Activated CD8-positive, alpha-beta T cell treated with anti-CD3 and anti-CD28 coated beads for 36 hours (primary cell): ENCODE measurements at regions of chr22 and their contacts with region 1.

Region 1: DNA sequence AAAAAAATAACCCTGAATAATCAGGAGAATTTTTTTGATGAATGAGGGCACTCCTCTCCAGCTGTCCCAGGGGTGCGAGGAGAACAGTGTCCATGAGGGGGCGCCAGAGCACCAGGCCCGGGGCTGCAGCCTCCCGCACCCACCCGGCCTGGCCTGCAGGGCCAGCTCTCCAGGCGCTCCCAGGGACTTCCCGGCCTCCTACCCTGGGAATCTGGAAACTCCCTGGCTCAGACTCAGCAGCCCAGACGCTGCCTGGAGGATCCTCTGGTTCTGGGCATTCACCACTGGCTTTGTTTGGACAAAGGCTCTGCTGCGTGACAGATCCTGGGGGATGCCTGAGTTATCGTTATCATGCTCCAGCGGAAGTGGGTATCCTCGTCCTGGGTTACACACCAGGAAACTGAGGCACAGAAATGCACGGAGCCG is 31.0 kb downstream of the MCM5 start:
- DNase-seq: peak; percentile 71
- ATAC-seq: peak; percentile 73
- H3K4me3 Mint-ChIP-seq: no peak overlapping the region
- H3K27ac Mint-ChIP-seq: no peak overlapping the region
- H3K4me1 Mint-ChIP-seq: no peaks in the 10 kb centered on the region
- H3K27me3 Mint-ChIP-seq: no peaks in the 10 kb centered on the region
- CTCF ChIP-seq: peak; percentile 92

Region 2: GRCh38 chr22:35274154-35274871 is 156.6 kb before region 1 on chr22:
- CTCF ChIA-PET with region 1: no interaction called
- POLR2A ChIA-PET with region 1: no interaction called
- intact Hi-C with region 1: no loop called
- DNase-seq: no peak
- ATAC-seq: no peak
- H3K4me3 Mint-ChIP-seq: no peak overlapping the region
- H3K27ac Mint-ChIP-seq: peak overlapping the region; percentile 60
- H3K4me1 Mint-ChIP-seq: peaks cover 29% of the 10 kb centered on the region
- H3K27me3 Mint-ChIP-seq: no peaks in the 10 kb centered on the region
- CTCF ChIP-seq: no peak

Region 3: GRCh38 chr22:35292786-35293185 is 138.1 kb before region 1 on chr22:
- CTCF ChIA-PET with region 1: no interaction called
- POLR2A ChIA-PET with region 1: no interaction called
- intact Hi-C with region 1: no loop called
- DNase-seq: no peak
- ATAC-seq: no peak
- H3K4me3 Mint-ChIP-seq: no peak overlapping the region
- H3K27ac Mint-ChIP-seq: no peak overlapping the region
- H3K4me1 Mint-ChIP-seq: peaks cover 4% of the 10 kb centered on the region
- H3K27me3 Mint-ChIP-seq: no peaks in the 10 kb centered on the region
- CTCF ChIP-seq: no peak

Region 4: GRCh38 chr22:35369996-35370395 is 60.9 kb before region 1 on chr22:
- CTCF ChIA-PET with region 1: no interaction called
- POLR2A ChIA-PET with region 1: no interaction called
- intact Hi-C with region 1: no loop called
- DNase-seq: no peak
- ATAC-seq: no peak
- H3K4me3 Mint-ChIP-seq: no peak overlapping the region
- H3K27ac Mint-ChIP-seq: no peak overlapping the region
- H3K4me1 Mint-ChIP-seq: peaks cover 5% of the 10 kb centered on the region
- H3K27me3 Mint-ChIP-seq: peaks cover 25% of the 10 kb centered on the region
- CTCF ChIP-seq: no peak

Region 5: DNA sequence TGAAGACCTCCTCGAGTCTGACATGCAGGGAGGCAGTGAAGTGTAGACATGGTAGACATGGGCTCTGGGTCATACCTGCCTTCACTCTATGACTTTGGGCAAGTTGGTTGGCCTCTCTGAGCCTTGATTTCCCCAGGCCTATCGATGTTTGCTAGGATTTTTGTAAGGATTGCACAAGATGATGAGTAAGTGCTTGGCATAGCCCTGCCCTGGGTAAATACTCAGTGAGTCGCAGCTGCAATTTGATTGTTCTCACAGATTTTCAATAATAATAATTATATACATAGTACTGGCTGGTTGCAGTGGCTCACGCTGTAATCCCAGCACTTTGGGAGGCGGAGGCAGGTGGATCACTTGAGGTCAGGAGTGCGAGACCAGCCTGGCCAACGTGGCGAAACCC is 12.8 kb before region 1 on chr22:
- CTCF ChIA-PET with region 1: interaction called, 29 read pairs
- POLR2A ChIA-PET with region 1: interaction called, 237 read pairs
- intact Hi-C with region 1: no loop called
- DNase-seq: no peak
- ATAC-seq: no peak
- H3K4me3 Mint-ChIP-seq: no peak overlapping the region
- H3K27ac Mint-ChIP-seq: no peak overlapping the region
- H3K4me1 Mint-ChIP-seq: no peaks in the 10 kb centered on the region
- H3K27me3 Mint-ChIP-seq: no peaks in the 10 kb centered on the region
- CTCF ChIP-seq: no peak